HEK293T (cell line): ENCODE measurements at regions of chr1 and their contacts with region 1.

Region 1: DNA sequence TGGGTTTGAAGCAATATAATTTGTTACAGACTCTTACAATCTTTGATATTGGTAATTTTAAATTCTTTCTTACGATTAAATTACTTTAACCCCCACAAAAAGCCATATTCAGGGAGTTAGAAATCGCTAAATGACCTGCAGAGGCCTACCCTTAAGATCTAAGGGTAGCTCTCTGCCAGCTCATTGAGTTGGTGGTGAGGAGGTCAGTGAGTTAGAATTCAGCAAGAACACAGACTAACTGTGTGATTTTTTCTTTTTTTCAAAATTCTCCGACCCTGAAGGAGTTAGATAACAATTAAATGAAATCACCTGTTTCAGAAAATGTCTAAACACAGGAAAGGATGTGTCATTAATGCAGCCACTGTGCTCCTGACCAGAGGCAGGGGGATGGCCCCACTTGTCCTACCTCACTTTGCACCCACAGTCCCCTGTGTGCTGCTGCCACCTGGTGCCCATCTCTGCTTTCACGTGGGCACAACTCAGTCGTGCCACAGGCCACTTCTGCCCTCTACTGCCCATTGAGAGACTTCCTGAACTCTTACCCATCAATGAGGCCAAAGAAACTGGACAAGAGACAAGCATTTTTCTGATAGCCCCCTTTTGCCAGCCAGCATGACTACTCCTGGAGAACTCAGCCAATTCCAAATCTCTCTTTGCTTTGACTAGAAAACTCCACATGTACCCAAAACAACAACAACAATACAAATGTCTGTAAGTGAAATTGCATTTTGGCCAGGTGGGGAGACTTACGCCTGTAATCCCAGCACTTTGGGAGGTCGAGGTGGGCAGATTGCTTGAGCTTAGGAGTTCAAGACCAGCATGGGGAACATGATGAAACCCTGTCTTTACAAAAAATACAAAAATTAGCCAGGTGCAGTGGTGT is 8.4 kb downstream of the CFAP45 start:
- DNase-seq: peak; percentile 56

Region 2: DNA sequence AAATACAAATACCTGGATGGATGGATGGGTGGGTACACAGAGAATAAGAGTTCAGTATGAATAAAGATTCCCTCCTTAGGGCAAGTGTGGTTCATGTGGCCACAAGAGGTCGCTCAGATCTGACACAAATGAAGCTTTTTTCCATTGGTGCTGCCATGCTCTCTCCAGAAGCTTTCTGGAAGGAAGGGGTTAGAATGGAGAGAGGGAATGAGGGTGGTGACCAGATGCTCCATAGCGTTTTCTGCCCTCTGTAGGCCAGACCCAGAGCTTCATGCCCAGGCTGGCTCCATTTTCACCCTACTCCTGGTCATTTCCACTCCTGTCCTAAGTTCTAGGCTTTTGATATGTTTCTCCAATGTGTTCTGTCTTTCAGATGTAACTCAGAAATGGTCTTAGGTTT is 92.6 kb before region 1 on chr1:
- CTCF ChIA-PET with region 1: interaction called, 53 read pairs
- POLR2A ChIA-PET with region 1: no interaction called
- DNase-seq: peak; percentile 81